ENCODE measurements at regions of chr4 and their contacts with region 1.

Region 1: GRCh38 chr4:187929024-187929423 is 66.5 kb upstream of the ZFP42 start:
- DNase-seq: peak; percentile 33
- ATAC-seq: peak; percentile 92
- H3K4me3 ChIP-seq: no peak overlapping the region
- H3K27ac ChIP-seq: no peak overlapping the region
- H3K4me1 ChIP-seq: no peaks in the 10 kb centered on the region
- H3K27me3 ChIP-seq: no peaks in the 10 kb centered on the region
- CTCF ChIP-seq: peak; percentile 37 to 71 (median 63); a peak in 5 of 6 replicates
- POLR2A ChIP-seq: no peak
- RAD21 ChIP-seq: peak; percentile 57

Region 2: DNA sequence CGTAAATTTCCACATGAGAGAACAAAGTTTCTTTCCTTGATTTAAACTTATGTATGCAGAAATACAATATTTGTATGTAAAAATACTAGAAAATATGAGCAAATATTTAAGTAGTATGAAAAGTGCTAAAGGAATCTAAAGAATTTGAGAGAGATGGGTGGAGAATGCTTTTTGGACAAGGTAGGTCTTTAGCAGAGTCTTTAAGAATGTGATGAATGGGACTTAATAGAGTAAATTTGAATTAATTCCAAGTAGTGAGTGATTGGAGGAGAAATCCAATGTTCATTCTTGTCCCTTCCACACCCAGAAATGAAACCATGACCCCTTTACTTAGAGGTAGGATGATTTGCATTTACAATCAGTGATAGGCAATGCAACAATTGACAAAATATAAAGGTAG is 504.4 kb before region 1 on chr4:
- CTCF ChIA-PET with region 1: no interaction called
- POLR2A ChIA-PET with region 1: no interaction called
- RAD21 ChIA-PET with region 1: no interaction called
- intact Hi-C with region 1: no loop called
- DNase-seq: no peak
- ATAC-seq: no peak
- H3K4me3 ChIP-seq: no peak overlapping the region
- H3K27ac ChIP-seq: no peak overlapping the region
- H3K4me1 ChIP-seq: no peaks in the 10 kb centered on the region
- H3K27me3 ChIP-seq: no peaks in the 10 kb centered on the region
- CTCF ChIP-seq: no peak
- POLR2A ChIP-seq: no peak
- RAD21 ChIP-seq: no peak

Region 3: GRCh38 chr4:188246488-188246887 is 317.5 kb after region 1 on chr4:
- CTCF ChIA-PET with region 1: no interaction called
- POLR2A ChIA-PET with region 1: no interaction called
- RAD21 ChIA-PET with region 1: no interaction called
- intact Hi-C with region 1: loop called (anchors 5 kb)
- DNase-seq: peak; percentile 7
- ATAC-seq: peak; percentile 75
- H3K4me3 ChIP-seq: no peak overlapping the region
- H3K27ac ChIP-seq: no peak overlapping the region
- H3K4me1 ChIP-seq: no peaks in the 10 kb centered on the region
- H3K27me3 ChIP-seq: no peaks in the 10 kb centered on the region
- CTCF ChIP-seq: peak in 2 of 3 experiments; percentile 26 to 46; a peak in 3 of 6 replicates
- POLR2A ChIP-seq: no peak
- RAD21 ChIP-seq: peak; percentile 71